PC-3 (cell line): ENCODE measurements at regions of chr11 and their contacts with region 1.

Region 1: DNA sequence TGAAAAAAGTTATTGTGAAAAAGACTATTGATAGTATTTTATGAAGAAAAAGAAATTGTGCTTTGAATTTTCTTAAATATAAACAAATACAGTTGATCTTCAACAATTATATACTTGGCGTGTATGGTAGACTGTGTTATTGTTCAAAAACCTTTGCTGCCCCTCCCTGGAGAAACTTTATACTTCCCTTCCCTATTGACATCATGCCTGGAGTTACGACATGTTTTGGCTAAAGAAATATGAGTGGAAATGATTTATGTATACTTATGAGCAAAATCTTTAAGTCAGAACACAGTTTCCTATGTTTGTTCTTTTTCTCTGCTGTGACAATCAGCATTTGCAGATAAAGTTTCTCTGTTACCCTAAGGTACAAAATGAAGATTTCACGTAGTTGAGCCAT is 243.8 kb downstream of the TMEM135 start:
- DNase-seq: peak; percentile 70
- ATAC-seq: peak; percentile 86
- H3K4me3 ChIP-seq: no peak overlapping the region
- H3K27ac ChIP-seq: no peak overlapping the region
- H3K4me1 ChIP-seq: peaks cover 9% of the 10 kb centered on the region
- H3K27me3 ChIP-seq: no peaks in the 10 kb centered on the region
- CTCF ChIP-seq: peak; percentile 71

Region 2: GRCh38 chr11:86955361-86956120 is 326.0 kb before region 1 on chr11 and contains the start of gene FZD4:
- CTCF ChIA-PET with region 1: no interaction called
- POLR2A ChIA-PET with region 1: no interaction called
- intact Hi-C with region 1: loop called (anchors 5 kb)
- DNase-seq: peak; percentile 94
- ATAC-seq: peak; percentile 89
- H3K4me3 ChIP-seq: peak within 1 kb of the TSS; percentile 96
- H3K27ac ChIP-seq: peak within 1 kb of the TSS; percentile 71
- H3K4me1 ChIP-seq: peaks cover 35% of the 10 kb centered on the region
- H3K27me3 ChIP-seq: no peaks in the 10 kb centered on the region
- CTCF ChIP-seq: peak; percentile 47; the same call in 1 of the 2 replicates
- total RNA-seq, gene FZD4: 17.3 and 17.7 TPM in 2 replicates

Region 3: DNA sequence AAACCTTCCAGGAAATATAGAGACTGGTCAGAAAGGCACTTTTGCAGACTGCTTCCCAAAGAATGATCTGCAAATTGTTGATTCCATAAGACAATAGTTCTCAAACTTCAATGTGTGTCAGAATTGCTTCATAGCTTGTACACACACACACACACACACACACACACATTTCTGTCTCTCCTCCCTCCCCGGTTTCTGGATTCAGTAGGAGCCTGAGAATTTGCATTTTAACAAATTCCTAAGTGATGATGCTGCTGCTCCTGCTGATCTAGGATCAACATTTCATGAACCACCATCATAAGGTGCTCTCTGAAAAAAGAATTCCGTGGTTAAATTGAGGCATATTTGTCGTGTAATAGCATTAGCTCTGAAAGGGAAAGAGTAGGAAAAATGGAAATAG is 291.0 kb before region 1 on chr11:
- CTCF ChIA-PET with region 1: no interaction called
- POLR2A ChIA-PET with region 1: no interaction called
- intact Hi-C with region 1: loop called (anchors 2 kb)
- DNase-seq: peak; percentile 82
- ATAC-seq: peak; percentile 43
- H3K4me3 ChIP-seq: no peak overlapping the region
- H3K27ac ChIP-seq: no peak overlapping the region
- H3K4me1 ChIP-seq: peaks cover 9% of the 10 kb centered on the region
- H3K27me3 ChIP-seq: no peaks in the 10 kb centered on the region
- CTCF ChIP-seq: no peak

Region 4: DNA sequence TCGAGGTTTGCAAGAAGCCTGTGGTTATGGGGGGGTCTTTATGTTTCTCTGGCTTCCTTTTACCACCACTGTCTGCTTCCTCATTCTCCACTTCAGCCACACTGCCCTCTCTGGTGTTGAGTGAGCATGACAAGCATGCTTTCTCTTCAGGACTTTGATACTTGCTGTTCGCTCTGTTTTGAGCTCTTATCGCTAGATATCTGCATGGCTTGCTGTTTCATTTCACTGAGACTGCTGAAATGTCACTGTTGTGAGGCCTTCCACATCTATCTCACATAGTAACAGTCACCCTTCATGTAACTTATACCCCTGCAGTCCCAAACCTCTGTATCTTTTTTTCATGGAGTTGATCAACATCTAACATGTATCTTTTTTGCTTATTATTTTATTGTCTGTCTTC is 183.9 kb before region 1 on chr11:
- CTCF ChIA-PET with region 1: no interaction called
- POLR2A ChIA-PET with region 1: no interaction called
- intact Hi-C with region 1: loop called (anchors 1 kb)
- DNase-seq: peak; percentile 76
- ATAC-seq: peak; percentile 79; the same call in 1 of the 2 replicates
- H3K4me3 ChIP-seq: no peak overlapping the region
- H3K27ac ChIP-seq: no peak overlapping the region
- H3K4me1 ChIP-seq: no peaks in the 10 kb centered on the region
- H3K27me3 ChIP-seq: no peaks in the 10 kb centered on the region
- CTCF ChIP-seq: peak; percentile 94

Region 5: DNA sequence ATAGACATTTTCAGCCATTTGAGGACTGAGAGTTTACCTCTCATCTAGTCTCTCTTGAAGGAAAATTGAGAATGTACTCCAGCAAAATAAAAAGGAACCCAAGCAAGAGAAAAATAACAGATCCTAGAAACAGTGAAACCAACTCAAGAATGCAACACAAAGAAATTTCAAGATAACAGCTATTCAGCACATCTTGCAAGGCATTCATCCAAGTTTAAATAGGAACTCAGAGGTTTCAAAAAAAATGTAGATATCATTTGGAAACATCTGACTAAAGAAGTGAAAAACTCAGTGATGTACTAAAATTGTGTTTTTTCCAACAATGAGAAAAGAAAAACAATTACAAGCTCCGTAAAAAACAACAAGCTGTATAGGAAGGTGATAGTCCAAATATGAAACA is 167.4 kb before region 1 on chr11:
- CTCF ChIA-PET with region 1: no interaction called
- POLR2A ChIA-PET with region 1: no interaction called
- intact Hi-C with region 1: no loop called
- DNase-seq: no peak
- ATAC-seq: no peak
- H3K4me3 ChIP-seq: no peak overlapping the region
- H3K27ac ChIP-seq: no peak overlapping the region
- H3K4me1 ChIP-seq: no peaks in the 10 kb centered on the region
- H3K27me3 ChIP-seq: no peaks in the 10 kb centered on the region
- CTCF ChIP-seq: no peak